ENCODE measurements at regions of chr2 and their contacts with region 1.

Region 1: GRCh38 chr2:222976521-222977076 is 75.4 kb upstream of the KCNE4 start:
- DNase-seq: no peak
- H3K4me3 ChIP-seq: no peak overlapping the region
- H3K27ac ChIP-seq: no peak overlapping the region
- H3K4me1 ChIP-seq: no peaks in the 10 kb centered on the region
- H3K27me3 ChIP-seq: no peaks in the 10 kb centered on the region
- CTCF ChIP-seq: no peak
- POLR2A ChIP-seq: no peak

Region 2: DNA sequence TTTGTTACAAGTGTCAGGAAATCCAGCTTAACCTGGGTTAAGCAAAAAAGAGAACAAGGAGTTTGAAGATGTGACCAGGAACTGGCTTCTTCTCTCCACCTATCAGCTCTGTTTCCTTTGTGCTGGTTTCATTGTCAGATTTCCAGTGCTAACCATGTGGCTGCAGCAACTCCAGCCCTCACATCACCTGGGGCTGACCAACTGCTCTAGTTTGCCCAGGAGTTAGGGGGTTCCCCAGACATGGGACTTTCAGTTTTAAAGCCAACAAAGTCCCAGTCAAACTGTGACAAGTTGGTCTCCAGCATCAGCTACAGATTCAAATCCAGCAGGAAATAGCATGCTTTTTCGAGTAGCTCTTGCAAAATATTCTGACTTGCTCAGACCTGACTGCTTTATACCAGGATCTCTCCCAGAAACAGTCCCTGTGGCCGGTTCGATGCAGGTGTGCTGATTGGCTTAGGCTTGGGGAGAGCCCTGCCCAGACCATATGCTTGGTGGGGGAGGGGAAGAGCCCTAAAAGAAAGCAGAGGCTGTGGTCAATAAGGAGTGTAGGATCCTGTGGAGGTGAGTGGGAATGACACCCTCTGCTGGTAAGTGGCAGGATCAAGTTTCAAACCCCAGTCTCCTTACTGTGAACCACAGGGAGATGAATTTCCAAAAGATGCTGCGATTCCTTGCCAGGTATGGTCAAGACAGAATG is 124.9 kb after region 1 on chr2:
- intact Hi-C with region 1: loop called (anchors 10 kb)
- DNase-seq: no peak
- H3K4me3 ChIP-seq: no peak overlapping the region
- H3K27ac ChIP-seq: no peak overlapping the region
- H3K4me1 ChIP-seq: no peaks in the 10 kb centered on the region
- H3K27me3 ChIP-seq: no peaks in the 10 kb centered on the region
- CTCF ChIP-seq: no peak
- POLR2A ChIP-seq: no peak

Region 3: DNA sequence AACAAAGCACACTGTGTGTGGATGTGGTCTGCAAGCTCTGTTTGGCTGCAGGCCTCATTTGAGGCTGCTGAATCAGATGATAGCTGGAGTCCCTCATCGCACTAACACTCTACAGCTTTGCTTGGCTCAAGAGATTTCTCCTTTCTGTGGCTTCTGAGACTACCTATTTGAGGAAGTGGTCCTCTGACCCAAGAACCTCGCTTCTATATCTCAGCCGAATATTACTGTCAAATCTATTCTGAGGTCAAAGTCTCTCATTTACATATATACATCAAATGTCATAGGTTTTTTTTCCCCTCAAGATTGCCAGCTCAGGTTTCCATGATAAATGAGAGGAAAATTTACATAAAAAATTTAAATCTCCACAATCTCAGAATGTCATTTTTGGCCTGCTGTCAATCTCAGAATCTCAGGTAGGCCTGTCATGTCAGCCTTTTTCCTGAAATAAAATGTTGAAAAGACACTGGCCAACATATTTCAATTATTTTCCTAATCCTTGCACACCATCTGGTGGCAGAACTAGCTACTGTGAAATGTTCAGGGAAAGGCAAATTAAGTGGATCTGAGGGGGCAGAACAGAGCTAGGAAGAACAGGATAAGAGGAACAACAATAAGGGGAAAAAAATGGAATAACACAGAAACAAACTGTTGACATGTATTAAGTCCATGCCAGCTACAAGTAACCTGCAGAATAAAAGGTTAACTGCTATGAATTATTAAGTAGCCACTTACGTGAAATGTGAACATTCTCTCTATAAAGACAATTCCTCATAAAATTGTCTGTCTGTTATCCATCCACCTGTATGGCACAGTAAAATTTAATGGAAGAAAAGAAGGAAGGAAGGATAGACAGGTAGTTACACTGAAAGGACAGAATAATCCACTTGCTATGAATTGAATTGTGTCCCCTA is 821.5 kb after region 1 on chr2:
- intact Hi-C with region 1: loop called (anchors 5 kb)
- DNase-seq: no peak
- H3K4me3 ChIP-seq: no peak overlapping the region
- H3K27ac ChIP-seq: no peak overlapping the region
- H3K4me1 ChIP-seq: no peaks in the 10 kb centered on the region
- H3K27me3 ChIP-seq: no peaks in the 10 kb centered on the region
- CTCF ChIP-seq: peak; percentile 44 to 63 (median 51)
- POLR2A ChIP-seq: no peak

Region 4: GRCh38 chr2:224302952-224303351 is 1326.4 kb after region 1 on chr2:
- intact Hi-C with region 1: no loop called
- DNase-seq: no peak
- H3K4me3 ChIP-seq: no peak overlapping the region
- H3K27ac ChIP-seq: no peak overlapping the region
- H3K4me1 ChIP-seq: no peaks in the 10 kb centered on the region
- H3K27me3 ChIP-seq: no peaks in the 10 kb centered on the region
- CTCF ChIP-seq: no peak
- POLR2A ChIP-seq: no peak